ENCODE measurements at regions of chr9 and their contacts with region 1.

Region 1: GRCh38 chr9:134163353-134164196 is 789 bp downstream of the RNU6ATAC start:
- DNase-seq: peak; percentile 62
- H3K4me3 ChIP-seq: peak overlapping the region; percentile 6 to 30 (median 25)
- H3K27ac ChIP-seq: peak overlapping the region; percentile 35
- H3K4me1 ChIP-seq: peaks cover 4% of the 10 kb centered on the region
- H3K27me3 ChIP-seq: no peaks in the 10 kb centered on the region
- CTCF ChIP-seq: peak; percentile 34 to 68
- POLR2A ChIP-seq: no peak

Region 2: GRCh38 chr9:134135343-134136118 is 28.0 kb before region 1 on chr9 and contains the start of gene WDR5:
- CTCF ChIA-PET with region 1: interaction called, 11 read pairs
- POLR2A ChIA-PET with region 1: interaction called, 3 read pairs
- dilution Hi-C with region 1: no loop called
- intact Hi-C with region 1: loop called (anchors 1 kb)
- DNase-seq: peak; percentile 81
- H3K4me3 ChIP-seq: peak within 1 kb of the TSS; percentile 84 to 97 (median 93)
- H3K27ac ChIP-seq: peak within 1 kb of the TSS; percentile 48
- H3K4me1 ChIP-seq: peaks cover 10% of the 10 kb centered on the region
- H3K27me3 ChIP-seq: no peaks in the 10 kb centered on the region
- CTCF ChIP-seq: peak in 1 of 2 donors; percentile 12
- POLR2A ChIP-seq: peak; percentile 61
- total RNA-seq, gene WDR5: 42.4 and 42.5 TPM in 2 replicates